ENCODE measurements at regions of chr2 and their contacts with region 1.

Region 1: DNA sequence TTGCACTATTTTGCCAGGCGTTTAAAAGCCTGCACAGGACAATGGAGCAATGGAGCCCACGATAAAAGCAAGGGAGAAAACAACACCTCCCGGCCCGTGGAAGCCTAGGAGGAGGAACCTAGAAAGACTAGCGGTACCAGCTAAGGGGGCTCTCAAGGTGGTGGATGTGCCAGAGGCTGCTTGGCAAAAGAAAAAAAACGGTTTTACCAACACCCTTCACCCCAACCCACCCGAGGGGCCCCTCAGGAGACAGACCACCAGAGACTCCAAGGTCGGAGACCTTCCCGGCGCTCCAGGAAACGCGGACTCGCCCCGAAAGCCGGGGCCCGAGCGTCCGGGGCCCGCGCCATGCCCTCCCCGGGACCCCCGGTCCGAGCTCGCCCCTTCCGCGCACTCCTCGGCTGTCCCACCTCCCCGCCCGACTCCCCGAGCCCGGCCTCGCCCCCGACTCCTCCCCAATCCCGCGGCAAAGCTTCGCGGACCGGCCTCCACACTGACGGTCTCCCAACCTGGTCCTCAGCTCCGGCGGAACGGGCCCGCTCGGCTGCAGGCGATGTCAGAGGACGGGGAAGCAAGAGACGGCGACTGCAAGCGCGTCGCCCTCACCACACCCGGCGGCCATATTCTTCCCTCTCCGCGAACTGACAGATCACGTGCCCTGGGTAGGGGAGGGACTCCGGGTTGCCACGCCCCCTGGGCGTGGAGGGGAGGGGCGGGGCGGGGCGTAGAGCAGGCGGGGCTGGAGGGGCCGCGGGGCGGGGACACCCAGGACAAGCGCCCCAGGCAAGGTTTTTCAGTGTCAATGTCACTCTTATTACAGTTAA is at the start of gene KIDINS220:
- DNase-seq: peak; percentile 86
- H3K4me3 Mint-ChIP-seq: peak within 1 kb of the TSS; percentile 100
- H3K27ac Mint-ChIP-seq: peak within 1 kb of the TSS; percentile 88
- H3K4me1 Mint-ChIP-seq: peaks cover 31% of the 10 kb centered on the region
- H3K27me3 Mint-ChIP-seq: no peaks in the 10 kb centered on the region
- total RNA-seq, gene KIDINS220: 19.3 to 20.5 TPM

Region 2: GRCh38 chr2:8767324-8767723 is 69.9 kb before region 1 on chr2:
- CTCF ChIA-PET with region 1: no interaction called
- intact Hi-C with region 1: no loop called
- DNase-seq: no peak
- H3K4me3 Mint-ChIP-seq: no peak overlapping the region
- H3K27ac Mint-ChIP-seq: no peak overlapping the region
- H3K4me1 Mint-ChIP-seq: no peaks in the 10 kb centered on the region
- H3K27me3 Mint-ChIP-seq: no peaks in the 10 kb centered on the region

Region 3: GRCh38 chr2:8803658-8804379 is 33.4 kb before region 1 on chr2:
- CTCF ChIA-PET with region 1: no interaction called
- intact Hi-C with region 1: loop called (anchors 1 kb)
- DNase-seq: peak; percentile 78
- H3K4me3 Mint-ChIP-seq: no peak overlapping the region
- H3K27ac Mint-ChIP-seq: peak overlapping the region; percentile 75
- H3K4me1 Mint-ChIP-seq: peaks cover 19% of the 10 kb centered on the region
- H3K27me3 Mint-ChIP-seq: no peaks in the 10 kb centered on the region

Region 4: GRCh38 chr2:9003616-9004337 is 166.6 kb after region 1 on chr2 and contains the start of gene MBOAT2:
- CTCF ChIA-PET with region 1: no interaction called
- intact Hi-C with region 1: loop called (anchors 1 kb)
- DNase-seq: peak; percentile 87
- H3K4me3 Mint-ChIP-seq: peak within 1 kb of the TSS; percentile 73
- H3K27ac Mint-ChIP-seq: no peak within 1 kb of the TSS
- H3K4me1 Mint-ChIP-seq: peaks cover 15% of the 10 kb centered on the region
- H3K27me3 Mint-ChIP-seq: peaks cover 5% of the 10 kb centered on the region
- total RNA-seq, gene MBOAT2: 4.1 to 4.4 TPM

Measured in activated naive CD4-positive, alpha-beta T cell treated with anti-CD3 and anti-CD28 coated beads for 36 hours (primary cell).